ENCODE measurements at regions of chr7 and their contacts with region 1.

Region 1: DNA sequence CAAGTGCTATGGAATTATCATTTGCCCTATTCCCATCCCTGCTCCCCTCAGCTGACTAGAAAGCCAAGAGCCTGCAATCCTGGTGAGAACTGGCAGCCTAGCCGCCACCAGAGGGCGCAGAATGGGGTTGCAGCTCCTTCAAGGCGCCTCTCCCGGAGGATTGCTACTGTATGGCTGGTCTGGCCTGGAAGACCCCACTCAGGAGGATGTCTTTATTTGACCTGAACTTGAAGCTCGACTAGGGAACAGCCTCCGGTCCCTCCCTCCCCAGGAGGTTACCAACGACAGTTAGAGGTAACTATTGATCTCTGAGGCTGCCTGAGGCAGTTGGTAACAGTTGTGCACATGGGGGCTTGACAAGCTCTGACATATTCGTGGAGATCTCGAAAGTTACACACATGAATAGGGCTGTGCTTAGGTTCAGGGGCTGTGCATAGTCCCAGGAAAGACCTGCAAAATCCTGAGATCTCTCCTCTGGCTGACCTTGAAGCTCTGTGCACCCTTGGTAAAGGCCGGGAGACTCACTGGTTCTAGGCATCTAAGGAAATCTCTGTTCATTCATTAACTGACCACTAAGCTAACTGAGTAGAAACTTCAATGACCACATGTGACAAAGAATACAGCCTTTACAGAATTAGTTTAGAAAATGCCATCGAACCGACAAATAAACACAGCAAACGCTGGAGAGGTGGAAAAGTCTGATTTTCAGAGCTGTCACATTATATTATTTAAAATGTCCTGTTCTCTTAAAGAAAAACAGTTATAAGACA is 65.7 kb downstream of the TSPAN12 start:
- DNase-seq: peak; percentile 69
- ATAC-seq: peak; percentile 66
- H3K4me3 ChIP-seq: no peak overlapping the region
- H3K4me3 Mint-ChIP-seq: no peak overlapping the region
- H3K27ac ChIP-seq: no peak overlapping the region
- H3K27ac Mint-ChIP-seq: no peak overlapping the region
- H3K4me1 ChIP-seq: no peaks in the 10 kb centered on the region
- H3K4me1 Mint-ChIP-seq: no peaks in the 10 kb centered on the region
- H3K27me3 ChIP-seq: no peaks in the 10 kb centered on the region
- H3K27me3 Mint-ChIP-seq: peaks cover 13% of the 10 kb centered on the region
- CTCF ChIP-seq: peak; percentile 88

Region 2: GRCh38 chr7:120805636-120806388 is 13.5 kb after region 1 on chr7:
- CTCF ChIA-PET with region 1: interaction called, 33 read pairs
- POLR2A ChIA-PET with region 1: no interaction called
- intact Hi-C with region 1: no loop called
- DNase-seq: peak; percentile 68
- ATAC-seq: no peak
- H3K4me3 ChIP-seq: no peak overlapping the region
- H3K4me3 Mint-ChIP-seq: no peak overlapping the region
- H3K27ac ChIP-seq: no peak overlapping the region
- H3K27ac Mint-ChIP-seq: no peak overlapping the region
- H3K4me1 ChIP-seq: no peaks in the 10 kb centered on the region
- H3K4me1 Mint-ChIP-seq: no peaks in the 10 kb centered on the region
- H3K27me3 ChIP-seq: no peaks in the 10 kb centered on the region
- H3K27me3 Mint-ChIP-seq: peaks cover 5% of the 10 kb centered on the region
- CTCF ChIP-seq: peak; percentile 95

Region 3: DNA sequence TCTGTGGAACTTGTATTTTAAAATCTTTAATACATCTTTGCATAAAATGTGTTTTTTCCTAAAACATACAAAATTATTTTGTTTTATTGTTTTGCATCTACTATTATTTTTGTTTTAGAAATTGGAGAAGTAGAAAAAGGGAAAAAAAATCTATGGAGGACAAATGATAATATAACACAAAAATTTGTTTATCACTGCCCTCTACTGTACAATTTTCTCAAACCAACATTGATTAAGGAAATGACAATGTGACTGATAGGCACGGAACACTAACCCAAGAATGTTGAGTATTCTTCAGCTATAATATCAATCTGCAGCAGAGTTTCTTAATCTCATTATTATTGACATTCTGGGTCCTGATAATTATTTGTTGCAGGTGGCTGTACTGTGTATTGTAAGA is 148.8 kb after region 1 on chr7:
- CTCF ChIA-PET with region 1: interaction called, 8 read pairs
- POLR2A ChIA-PET with region 1: no interaction called
- intact Hi-C with region 1: loop called (anchors 1 kb)
- DNase-seq: peak; percentile 36
- ATAC-seq: no peak
- H3K4me3 ChIP-seq: no peak overlapping the region
- H3K4me3 Mint-ChIP-seq: no peak overlapping the region
- H3K27ac ChIP-seq: no peak overlapping the region
- H3K27ac Mint-ChIP-seq: no peak overlapping the region
- H3K4me1 ChIP-seq: no peaks in the 10 kb centered on the region
- H3K4me1 Mint-ChIP-seq: no peaks in the 10 kb centered on the region
- H3K27me3 ChIP-seq: no peaks in the 10 kb centered on the region
- H3K27me3 Mint-ChIP-seq: peaks cover 4% of the 10 kb centered on the region
- CTCF ChIP-seq: peak; percentile 36

Region 4: GRCh38 chr7:121081327-121081936 is 289.2 kb after region 1 on chr7:
- CTCF ChIA-PET with region 1: interaction called, 22 read pairs
- POLR2A ChIA-PET with region 1: no interaction called
- intact Hi-C with region 1: loop called (anchors 1 kb)
- DNase-seq: peak; percentile 62
- ATAC-seq: peak; percentile 76
- H3K4me3 ChIP-seq: no peak overlapping the region
- H3K4me3 Mint-ChIP-seq: no peak overlapping the region
- H3K27ac ChIP-seq: no peak overlapping the region
- H3K27ac Mint-ChIP-seq: no peak overlapping the region
- H3K4me1 ChIP-seq: peaks cover 2 to 9% of the 10 kb centered on the region in 2 donors
- H3K4me1 Mint-ChIP-seq: peaks cover 12% of the 10 kb centered on the region
- H3K27me3 ChIP-seq: no peaks in the 10 kb centered on the region
- H3K27me3 Mint-ChIP-seq: no peaks in the 10 kb centered on the region
- CTCF ChIP-seq: peak; percentile 80

Region 5: GRCh38 chr7:121107923-121108498 is 315.7 kb after region 1 on chr7:
- CTCF ChIA-PET with region 1: interaction called, 11 read pairs
- POLR2A ChIA-PET with region 1: no interaction called
- intact Hi-C with region 1: loop called (anchors 1 kb)
- DNase-seq: peak; percentile 67
- ATAC-seq: peak; percentile 78
- H3K4me3 ChIP-seq: no peak overlapping the region
- H3K4me3 Mint-ChIP-seq: no peak overlapping the region
- H3K27ac ChIP-seq: no peak overlapping the region
- H3K27ac Mint-ChIP-seq: no peak overlapping the region
- H3K4me1 ChIP-seq: no peaks in the 10 kb centered on the region
- H3K4me1 Mint-ChIP-seq: no peaks in the 10 kb centered on the region
- H3K27me3 ChIP-seq: no peaks in the 10 kb centered on the region
- H3K27me3 Mint-ChIP-seq: no peaks in the 10 kb centered on the region
- CTCF ChIP-seq: peak; percentile 98

Region 6: GRCh38 chr7:121329191-121330052 is 537.1 kb after region 1 on chr7:
- CTCF ChIA-PET with region 1: no interaction called
- POLR2A ChIA-PET with region 1: no interaction called
- intact Hi-C with region 1: loop called (anchors 10 kb)
- DNase-seq: peak; percentile 65
- ATAC-seq: peak; percentile 49
- H3K4me3 ChIP-seq: peak overlapping the region; percentile 54 to 97 (median 86)
- H3K4me3 Mint-ChIP-seq: peak overlapping the region; percentile 91
- H3K27ac ChIP-seq: peak overlapping the region; percentile 25 to 32
- H3K27ac Mint-ChIP-seq: peak overlapping the region; percentile 92
- H3K4me1 ChIP-seq: peaks cover 20 to 21% of the 10 kb centered on the region in 2 donors
- H3K4me1 Mint-ChIP-seq: peaks cover 46% of the 10 kb centered on the region
- H3K27me3 ChIP-seq: peaks cover 0 to 3% (median 0%) of the 10 kb centered on the region in 4 experiments
- H3K27me3 Mint-ChIP-seq: peaks cover 13% of the 10 kb centered on the region
- CTCF ChIP-seq: peak; percentile 26

Region 7: DNA sequence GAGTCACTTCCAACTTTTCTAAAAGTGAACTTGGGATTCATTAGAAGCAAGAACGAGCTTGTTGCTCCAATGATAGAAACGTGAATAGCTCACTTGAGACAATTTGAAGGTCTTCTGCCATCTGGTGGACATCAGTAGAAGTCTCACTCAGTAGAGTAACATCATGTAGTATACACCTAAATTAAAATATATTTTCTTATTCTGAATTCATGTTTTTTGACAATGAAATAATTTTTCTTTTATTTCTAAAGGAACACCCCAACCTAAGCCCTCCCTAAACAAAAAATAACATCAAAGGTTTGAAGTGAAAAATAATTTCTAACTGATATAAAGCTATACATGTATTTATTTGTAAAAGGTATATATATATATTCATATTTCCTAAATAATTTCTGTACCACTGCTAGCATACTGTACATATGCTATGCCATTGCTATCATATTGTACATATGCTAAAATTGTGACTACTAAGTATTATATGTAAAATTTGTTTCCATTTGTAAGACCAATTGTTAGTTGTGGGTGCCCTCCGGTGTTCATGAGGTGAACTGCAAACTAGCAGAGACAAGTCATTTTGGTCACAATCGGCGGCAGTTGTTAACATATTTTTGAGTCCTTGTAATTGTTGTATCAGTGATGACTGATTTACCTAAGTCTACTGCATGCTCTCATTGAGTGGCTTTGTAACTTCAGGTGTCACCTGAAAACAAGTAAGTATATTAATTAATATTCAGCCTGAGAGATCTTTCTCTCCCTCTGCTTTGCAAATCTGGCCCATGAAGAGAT is 1202.5 kb after region 1 on chr7:
- CTCF ChIA-PET with region 1: interaction called, 21 read pairs
- POLR2A ChIA-PET with region 1: no interaction called
- intact Hi-C with region 1: loop called (anchors 2 kb)
- DNase-seq: peak; percentile 53
- ATAC-seq: peak; percentile 74
- H3K4me3 ChIP-seq: no peak overlapping the region
- H3K4me3 Mint-ChIP-seq: no peak overlapping the region
- H3K27ac ChIP-seq: no peak overlapping the region
- H3K27ac Mint-ChIP-seq: no peak overlapping the region
- H3K4me1 ChIP-seq: no peaks in the 10 kb centered on the region
- H3K4me1 Mint-ChIP-seq: no peaks in the 10 kb centered on the region
- H3K27me3 ChIP-seq: no peaks in the 10 kb centered on the region
- H3K27me3 Mint-ChIP-seq: peaks cover 3% of the 10 kb centered on the region
- CTCF ChIP-seq: peak; percentile 91

Measured in B cell (primary cell).